ENCODE measurements at regions of chr6 and their contacts with region 1.

Region 1: DNA sequence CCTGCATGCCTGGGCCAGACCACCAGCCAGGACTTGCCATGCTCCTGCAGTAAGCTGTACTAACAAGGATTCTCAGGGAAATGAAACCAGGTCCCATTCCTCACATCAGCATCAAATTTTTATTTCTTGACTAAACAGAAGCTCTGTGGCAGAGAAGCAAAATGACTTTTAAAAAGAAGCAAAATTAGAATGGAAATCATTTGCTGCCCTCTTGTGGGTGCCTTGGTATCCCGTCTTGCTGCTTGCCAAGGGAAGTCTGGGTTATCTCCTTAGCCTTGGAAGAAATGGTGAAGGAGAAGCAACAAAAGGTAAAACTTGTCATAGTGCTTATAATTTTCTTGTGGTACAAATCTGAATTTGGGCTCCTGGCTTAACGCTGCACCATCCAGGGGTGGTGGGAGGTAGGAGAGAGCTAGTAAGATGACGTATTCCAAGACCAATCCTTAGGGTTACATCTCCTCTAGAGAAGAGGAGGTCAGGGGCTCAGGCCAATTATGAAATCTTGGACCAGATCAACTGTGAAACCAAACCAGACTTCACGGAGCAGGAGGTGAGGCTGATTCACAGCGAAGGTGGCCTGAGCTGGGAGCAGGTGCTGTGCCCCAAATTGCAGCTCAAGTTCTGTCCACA is 107.5 kb downstream of the FAXC start:
- DNase-seq: no peak
- H3K4me3 Mint-ChIP-seq: no peak overlapping the region
- H3K27ac Mint-ChIP-seq: no peak overlapping the region
- H3K4me1 Mint-ChIP-seq: no peaks in the 10 kb centered on the region
- H3K27me3 Mint-ChIP-seq: no peaks in the 10 kb centered on the region

Region 2: DNA sequence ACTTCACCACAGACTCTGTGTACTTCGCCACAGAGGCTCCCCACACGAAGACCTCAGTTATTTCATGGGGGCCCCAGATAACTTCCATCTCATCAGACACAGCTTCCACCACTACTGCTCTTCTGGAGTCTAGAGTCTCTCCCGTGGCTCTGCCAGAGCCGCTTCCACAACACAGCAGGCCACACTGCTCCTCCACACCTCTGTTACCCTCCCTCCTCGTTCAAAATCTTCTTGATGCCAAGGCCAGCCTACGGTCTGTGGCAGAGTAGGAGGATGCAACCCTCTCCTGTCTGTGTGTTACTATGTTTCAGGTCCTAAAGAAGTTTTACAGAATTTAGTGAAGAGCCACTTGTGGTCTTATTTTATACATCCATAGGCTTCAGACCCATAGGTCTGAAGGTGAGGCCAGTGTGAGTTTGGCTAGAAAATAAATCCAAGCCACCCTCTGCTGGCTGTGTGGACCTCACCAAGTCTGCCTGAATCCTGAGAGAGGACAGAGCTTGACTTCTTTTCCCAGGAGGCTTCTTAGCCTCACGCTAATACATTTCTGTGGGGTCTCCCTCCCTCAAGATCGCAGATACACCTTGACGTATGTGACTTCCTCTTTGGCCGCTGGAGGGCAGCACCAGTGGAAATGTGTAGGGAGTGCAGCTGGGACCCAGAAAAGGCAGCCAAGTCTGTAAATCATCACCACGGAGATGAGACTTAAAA is 90.2 kb before region 1 on chr6:
- intact Hi-C with region 1: loop called (anchors 5 kb)
- DNase-seq: peak; percentile 13
- H3K4me3 Mint-ChIP-seq: no peak overlapping the region
- H3K27ac Mint-ChIP-seq: no peak overlapping the region
- H3K4me1 Mint-ChIP-seq: no peaks in the 10 kb centered on the region
- H3K27me3 Mint-ChIP-seq: peaks cover 1% of the 10 kb centered on the region

Measured in activated T-helper 2 cell treated with anti-CD3 and anti-CD28 coated beads, Interferon-gamma antibody, Interleukin-2, Interleukin-4, amounts not matched to agents 10 μg/mL and 5 μg/mL and 100 μg/mL, durations not matched to agents 14 hours and 24 hours and 36 hours (primary cell).